Activated T-helper 1 cell treated with anti-CD3 and anti-CD28 coated beads, Interleukin-12 subunit alpha, Interleukin-12 subunit beta, Interleukin-2, Interleukin-4 antibody, amounts not matched to agents 30 ng/mL and 10 ng/mL and 1 ng/mL, durations not matched to agents 14 hours and 24 hours and 36 hours (primary cell): ENCODE measurements at regions of chr19 and their contacts with region 1.

Region 1: GRCh38 chr19:46529622-46530462 is 34.2 kb upstream of the PNMA8B start:
- DNase-seq: peak; percentile 60
- H3K4me3 Mint-ChIP-seq: no peak overlapping the region
- H3K27ac Mint-ChIP-seq: no peak overlapping the region
- H3K4me1 Mint-ChIP-seq: peaks cover 15% of the 10 kb centered on the region
- H3K27me3 Mint-ChIP-seq: peaks cover 2% of the 10 kb centered on the region

Region 2: DNA sequence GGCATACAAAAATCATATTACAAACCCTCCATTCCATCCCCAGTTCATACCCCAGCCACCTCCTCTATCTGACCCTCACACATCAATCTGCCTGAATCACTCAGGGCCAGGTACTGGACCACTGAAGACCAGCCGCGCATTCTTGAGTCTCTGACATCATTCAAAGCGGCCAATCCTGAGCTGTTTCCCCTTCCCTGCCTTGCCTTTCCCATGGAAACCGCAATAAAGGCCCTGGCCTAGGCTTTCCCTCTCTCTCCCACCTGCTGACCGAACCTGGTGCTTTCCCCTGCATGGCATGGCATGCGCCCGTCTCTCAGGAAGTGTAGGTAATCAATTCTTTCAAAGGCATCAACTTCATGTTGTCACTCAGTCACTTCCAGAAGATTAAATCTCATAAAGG is 250.7 kb before region 1 on chr19:
- intact Hi-C with region 1: no loop called
- DNase-seq: no peak
- H3K4me3 Mint-ChIP-seq: no peak overlapping the region
- H3K27ac Mint-ChIP-seq: no peak overlapping the region
- H3K4me1 Mint-ChIP-seq: no peaks in the 10 kb centered on the region
- H3K27me3 Mint-ChIP-seq: peaks cover 25% of the 10 kb centered on the region

Region 3: GRCh38 chr19:46542428-46543230 is 12.8 kb after region 1 on chr19:
- intact Hi-C with region 1: loop called (anchors 1 kb)
- DNase-seq: peak; percentile 51
- H3K4me3 Mint-ChIP-seq: no peak overlapping the region
- H3K27ac Mint-ChIP-seq: no peak overlapping the region
- H3K4me1 Mint-ChIP-seq: peaks cover 9% of the 10 kb centered on the region
- H3K27me3 Mint-ChIP-seq: peaks cover 7% of the 10 kb centered on the region

Region 4: DNA sequence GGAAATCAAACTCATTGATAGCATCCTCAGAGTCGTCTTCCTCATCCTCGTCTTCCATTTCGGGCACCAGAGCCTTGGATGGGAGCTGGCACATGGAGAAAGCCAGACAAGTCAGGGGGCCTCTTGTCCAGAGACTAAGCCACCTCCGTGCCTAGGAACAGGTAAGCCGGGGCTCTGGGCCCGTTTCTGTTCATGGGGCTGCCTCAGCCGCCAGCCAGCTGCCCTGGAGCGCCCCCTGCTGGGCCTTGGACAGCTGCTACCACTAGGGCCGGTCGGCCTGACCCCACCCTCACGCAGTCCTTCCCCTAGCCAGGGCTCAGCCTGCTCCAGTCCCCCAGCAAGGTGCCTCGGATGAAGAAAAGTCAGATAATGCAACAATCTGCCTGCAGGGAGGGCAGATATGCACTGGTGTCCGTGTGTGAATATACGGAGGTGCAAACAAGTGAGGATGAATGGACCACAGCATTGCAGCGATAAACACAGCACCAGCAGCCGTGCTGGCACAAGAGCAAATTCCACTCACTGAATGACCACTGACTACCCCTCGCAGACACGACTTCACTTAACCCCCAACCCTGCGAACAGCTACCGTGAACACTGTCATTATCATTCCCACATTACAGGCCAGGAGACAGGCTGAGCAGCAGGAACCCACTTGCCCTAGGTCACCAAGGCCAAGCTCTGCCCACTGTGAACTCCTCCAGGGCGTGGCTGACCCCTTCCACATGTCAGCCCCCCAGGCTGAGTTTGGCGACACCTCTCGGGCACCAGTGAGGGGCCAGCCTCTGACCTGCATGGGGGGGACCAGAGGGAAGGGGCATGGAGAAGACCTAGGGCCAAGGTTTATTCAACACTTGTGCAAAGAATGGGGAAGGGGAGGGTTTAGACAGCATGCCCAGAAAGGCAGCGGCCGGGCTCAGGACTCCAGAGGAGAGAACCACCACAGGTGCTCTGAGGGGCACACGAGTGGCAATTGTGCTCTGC is 199.1 kb after region 1 on chr19:
- intact Hi-C with region 1: loop called (anchors 1 kb)
- DNase-seq: peak; percentile 74
- H3K4me3 Mint-ChIP-seq: no peak overlapping the region
- H3K27ac Mint-ChIP-seq: no peak overlapping the region
- H3K4me1 Mint-ChIP-seq: peaks cover 28% of the 10 kb centered on the region
- H3K27me3 Mint-ChIP-seq: no peaks in the 10 kb centered on the region

Region 5: DNA sequence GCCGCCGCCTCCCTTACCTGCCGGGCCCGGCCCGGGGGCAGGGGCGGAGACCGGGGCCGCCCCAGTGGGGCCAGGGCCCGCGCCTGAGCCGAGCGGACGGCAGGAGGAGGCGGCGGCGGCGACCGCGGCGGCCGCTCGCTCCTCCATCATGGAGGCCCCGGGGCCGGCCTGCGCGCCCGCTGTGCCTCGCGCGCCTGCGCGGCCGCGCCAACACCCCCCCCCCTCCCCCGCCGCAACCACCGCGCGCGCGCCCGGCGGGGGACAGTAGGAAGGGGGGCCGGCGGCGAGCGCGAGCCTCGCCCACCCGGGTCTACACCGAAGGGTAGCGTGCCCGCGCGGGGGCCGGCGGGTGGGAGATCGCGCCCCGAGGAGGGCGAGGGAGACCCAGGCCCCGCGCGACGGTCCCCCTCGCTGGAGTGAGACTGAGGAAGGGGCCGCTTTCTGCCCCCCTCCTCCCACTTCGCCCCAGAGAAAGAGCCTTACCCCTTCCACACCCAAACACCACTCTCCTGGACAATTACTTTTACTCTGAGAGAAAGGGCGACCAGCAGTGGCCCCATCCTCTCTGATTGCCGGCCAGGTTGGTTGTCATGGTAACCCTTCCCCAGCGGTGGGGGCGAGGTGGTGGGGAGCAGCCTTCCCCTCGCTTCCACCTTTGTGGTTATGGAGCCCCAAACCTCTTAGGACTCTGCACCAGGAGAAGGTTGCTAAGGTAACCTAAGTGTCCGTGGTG is 216.6 kb after region 1 on chr19 and contains the start of gene STRN4:
- intact Hi-C with region 1: loop called (anchors 1 kb)
- DNase-seq: peak; percentile 31
- H3K4me3 Mint-ChIP-seq: peak within 1 kb of the TSS; percentile 95
- H3K27ac Mint-ChIP-seq: peak within 1 kb of the TSS; percentile 91
- H3K4me1 Mint-ChIP-seq: peaks cover 46% of the 10 kb centered on the region
- H3K27me3 Mint-ChIP-seq: no peaks in the 10 kb centered on the region
- total RNA-seq, gene STRN4: 106 and 116 TPM in 2 replicates

Region 6: GRCh38 chr19:46753420-46754155 is 223.7 kb after region 1 on chr19:
- intact Hi-C with region 1: loop called (anchors 1 kb)
- DNase-seq: peak; percentile 56
- H3K4me3 Mint-ChIP-seq: no peak overlapping the region
- H3K27ac Mint-ChIP-seq: no peak overlapping the region
- H3K4me1 Mint-ChIP-seq: peaks cover 11% of the 10 kb centered on the region
- H3K27me3 Mint-ChIP-seq: no peaks in the 10 kb centered on the region